Activated CD4-positive, alpha-beta memory T cell treated with anti-CD3 and anti-CD28 coated beads, Interleukin-2, amount 10 ng/mL, durations not matched to agents 7 days and 5 days (primary cell): ENCODE measurements at regions of chr14 and their contacts with region 1.

Region 1: GRCh38 chr14:49862089-49862673 is 9.6 kb upstream of the NEMF start:
- DNase-seq: peak; percentile 91
- H3K4me3 Mint-ChIP-seq: no peak overlapping the region
- H3K27ac Mint-ChIP-seq: no peak overlapping the region
- H3K4me1 Mint-ChIP-seq: peaks cover 29% of the 10 kb centered on the region
- H3K27me3 Mint-ChIP-seq: no peaks in the 10 kb centered on the region

Region 2: DNA sequence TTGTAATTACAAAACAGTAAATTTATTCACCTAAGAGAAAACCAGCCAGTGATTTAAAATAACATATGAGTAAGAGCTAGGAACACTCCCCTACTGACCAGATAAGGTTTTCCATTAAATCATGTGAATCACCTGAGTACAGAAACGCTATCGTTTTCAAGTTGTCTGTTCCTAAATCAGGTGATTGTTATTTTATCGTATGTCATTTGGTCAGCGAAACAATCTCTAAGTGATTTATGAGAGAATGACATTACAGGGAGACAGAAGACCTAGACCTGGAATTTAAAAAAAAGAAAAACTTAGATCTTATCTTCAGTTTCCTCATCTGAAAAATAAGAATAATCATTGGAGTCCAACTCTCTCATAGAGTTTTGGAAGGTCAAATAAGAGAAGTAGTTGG is 323.3 kb before region 1 on chr14:
- CTCF ChIA-PET with region 1: no interaction called
- POLR2A ChIA-PET with region 1: no interaction called
- DNase-seq: no peak
- H3K4me3 Mint-ChIP-seq: no peak overlapping the region
- H3K27ac Mint-ChIP-seq: no peak overlapping the region
- H3K4me1 Mint-ChIP-seq: no peaks in the 10 kb centered on the region
- H3K27me3 Mint-ChIP-seq: peaks cover 4% of the 10 kb centered on the region

Region 3: GRCh38 chr14:49585803-49586672 is 276.1 kb before region 1 on chr14 and contains the start of gene RPS29:
- CTCF ChIA-PET with region 1: interaction called, 15 read pairs
- POLR2A ChIA-PET with region 1: interaction called, 20 read pairs
- DNase-seq: peak; percentile 99
- H3K4me3 Mint-ChIP-seq: peak within 1 kb of the TSS; percentile 85
- H3K27ac Mint-ChIP-seq: peak within 1 kb of the TSS; percentile 99
- H3K4me1 Mint-ChIP-seq: peaks cover 50% of the 10 kb centered on the region
- H3K27me3 Mint-ChIP-seq: no peaks in the 10 kb centered on the region
- total RNA-seq, gene RPS29: 1,659 to 1,700 TPM

Region 4: DNA sequence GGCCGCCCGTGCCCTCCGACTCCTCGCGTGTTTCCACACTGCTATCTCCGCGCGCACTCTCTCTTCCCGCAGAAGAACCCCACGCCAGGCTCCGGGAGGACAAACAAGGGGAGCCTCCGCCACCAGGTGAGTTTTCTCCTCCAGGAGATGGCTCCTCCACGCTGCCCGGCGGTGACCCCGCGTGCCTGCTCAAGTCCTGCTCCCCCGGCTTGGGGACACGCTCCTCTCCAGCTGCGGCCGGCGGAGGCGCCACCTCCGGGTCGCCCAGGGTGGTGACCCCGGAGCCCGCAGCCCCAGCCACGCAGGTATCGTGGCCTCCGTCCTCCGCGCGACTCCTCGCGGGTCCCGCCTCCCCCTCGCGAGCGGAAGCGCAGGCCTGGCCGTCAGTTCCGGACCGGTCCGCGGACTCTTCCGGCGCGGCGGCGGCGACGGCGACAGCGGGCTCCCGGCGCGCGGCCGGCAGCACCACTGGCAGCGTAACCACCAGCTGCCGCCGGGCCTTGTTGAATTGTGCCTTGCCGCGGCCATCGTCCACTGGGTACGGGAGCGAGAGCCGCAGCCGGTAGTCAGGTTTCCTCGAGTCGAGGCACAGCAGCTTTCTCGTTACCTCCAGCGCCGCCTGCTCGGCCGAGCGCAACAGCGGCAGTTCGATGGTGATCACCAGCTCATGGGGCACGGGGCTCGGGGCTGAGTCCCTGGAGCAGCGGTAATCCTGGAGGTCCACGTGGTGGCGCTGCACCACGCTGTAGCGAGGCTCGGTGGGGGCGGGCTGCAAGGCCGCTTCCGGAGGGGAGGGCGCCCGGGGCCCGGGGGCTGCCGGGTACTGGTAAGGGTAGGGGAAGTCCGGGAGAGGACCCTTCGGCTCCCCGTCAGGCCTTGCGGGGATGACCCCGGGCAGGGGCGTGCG is 228.3 kb before region 1 on chr14:
- CTCF ChIA-PET with region 1: interaction called, 49 read pairs
- POLR2A ChIA-PET with region 1: interaction called, 27 read pairs
- DNase-seq: peak; percentile 95
- H3K4me3 Mint-ChIP-seq: peak overlapping the region; percentile 88
- H3K27ac Mint-ChIP-seq: peak overlapping the region; percentile 81
- H3K4me1 Mint-ChIP-seq: peaks cover 45% of the 10 kb centered on the region
- H3K27me3 Mint-ChIP-seq: no peaks in the 10 kb centered on the region

Region 5: DNA sequence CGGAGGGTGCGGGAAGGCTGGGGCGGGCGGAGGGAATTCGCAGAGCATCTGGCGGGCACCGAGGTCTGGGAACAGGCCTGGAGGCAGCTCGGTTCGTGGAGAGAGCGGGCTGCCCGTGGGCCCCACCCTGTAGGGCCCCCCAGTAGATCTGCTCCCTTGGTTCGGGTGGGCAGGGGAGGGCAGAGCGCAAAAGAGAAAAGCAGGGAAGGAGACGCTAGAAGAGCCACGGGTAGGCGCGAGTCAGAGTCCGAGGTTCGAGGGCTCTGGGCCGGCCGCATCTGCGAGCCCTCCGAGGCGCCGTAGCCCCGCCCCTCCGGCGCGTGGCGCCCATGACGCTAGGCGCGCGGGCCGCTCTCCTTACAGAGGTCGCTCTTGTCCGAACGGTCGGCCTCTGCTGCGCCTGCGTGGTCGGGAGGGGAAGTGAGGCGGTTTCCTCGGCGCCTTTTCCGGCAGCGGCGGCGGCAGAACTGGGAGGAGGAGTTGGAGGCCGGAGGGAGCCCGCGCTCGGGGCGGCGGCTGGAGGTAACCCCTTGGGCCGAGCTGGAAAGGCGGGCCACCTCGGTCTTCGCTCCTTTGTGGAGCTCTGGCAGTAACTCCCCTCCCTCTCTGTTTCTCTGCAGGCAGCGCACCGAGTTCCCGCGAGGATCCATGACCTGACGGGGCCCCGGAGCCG is 30.6 kb after region 1 on chr14 and contains the start of gene ARF6:
- CTCF ChIA-PET with region 1: interaction called, 35 read pairs
- POLR2A ChIA-PET with region 1: interaction called, 162 read pairs
- DNase-seq: peak; percentile 98
- H3K4me3 Mint-ChIP-seq: peak within 1 kb of the TSS; percentile 96
- H3K27ac Mint-ChIP-seq: peak within 1 kb of the TSS; percentile 100
- H3K4me1 Mint-ChIP-seq: peaks cover 20% of the 10 kb centered on the region
- H3K27me3 Mint-ChIP-seq: no peaks in the 10 kb centered on the region
- total RNA-seq, gene ARF6: 198 to 199 TPM

Region 6: GRCh38 chr14:49933704-49934103 is 71.5 kb after region 1 on chr14:
- CTCF ChIA-PET with region 1: no interaction called
- POLR2A ChIA-PET with region 1: no interaction called
- DNase-seq: no peak
- H3K4me3 Mint-ChIP-seq: no peak overlapping the region
- H3K27ac Mint-ChIP-seq: no peak overlapping the region
- H3K4me1 Mint-ChIP-seq: peaks cover 21% of the 10 kb centered on the region
- H3K27me3 Mint-ChIP-seq: no peaks in the 10 kb centered on the region

Region 7: DNA sequence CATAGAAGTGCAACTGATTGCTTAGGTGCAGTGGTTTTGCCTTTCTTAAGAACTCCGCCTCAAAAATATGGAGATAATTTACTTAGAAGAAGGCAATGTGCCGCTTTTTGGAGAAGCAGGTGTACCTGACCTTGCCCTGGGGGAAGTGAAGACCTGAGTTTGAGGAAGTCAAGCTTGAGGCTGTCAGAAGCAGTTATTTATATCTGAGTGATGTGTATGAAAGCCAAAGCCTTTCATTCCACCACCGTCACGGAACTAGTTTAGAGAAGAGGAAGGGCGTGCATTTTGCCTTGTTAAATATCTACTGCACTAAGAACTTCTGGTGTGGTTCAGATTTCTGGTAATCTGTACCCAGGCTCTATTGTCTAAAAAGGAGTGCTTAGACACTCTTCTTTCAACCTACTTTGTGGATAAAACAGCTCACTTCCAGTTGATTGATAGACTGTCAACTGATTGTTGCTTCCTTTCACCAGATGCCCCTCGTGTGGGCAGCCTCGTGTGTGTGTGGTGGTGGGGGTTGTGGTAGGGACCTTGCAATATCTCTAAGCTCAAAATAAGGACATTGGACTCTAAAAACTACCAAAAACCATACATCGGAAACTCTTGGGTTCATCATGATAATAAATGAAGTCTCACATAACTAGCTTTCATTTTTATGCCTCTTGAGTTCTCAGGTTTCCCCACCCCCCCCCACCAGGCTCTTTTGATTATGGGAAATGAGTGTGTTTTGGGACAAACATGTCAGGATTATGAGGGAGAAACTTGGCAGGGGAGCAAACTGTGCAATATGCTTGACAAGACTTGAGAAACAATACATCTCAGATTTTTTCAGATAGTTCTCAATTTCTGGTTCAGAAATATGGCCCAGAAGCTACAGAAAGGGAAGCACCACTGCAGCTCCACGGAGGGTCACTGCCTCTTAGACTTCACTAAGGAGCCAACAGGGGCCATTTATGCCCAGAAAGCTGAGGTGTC is 109.3 kb after region 1 on chr14:
- CTCF ChIA-PET with region 1: interaction called, 42 read pairs
- POLR2A ChIA-PET with region 1: interaction called, 70 read pairs
- DNase-seq: peak; percentile 63
- H3K4me3 Mint-ChIP-seq: peak overlapping the region; percentile 72
- H3K27ac Mint-ChIP-seq: peak overlapping the region; percentile 98
- H3K4me1 Mint-ChIP-seq: peaks cover 57% of the 10 kb centered on the region
- H3K27me3 Mint-ChIP-seq: no peaks in the 10 kb centered on the region

Region 8: DNA sequence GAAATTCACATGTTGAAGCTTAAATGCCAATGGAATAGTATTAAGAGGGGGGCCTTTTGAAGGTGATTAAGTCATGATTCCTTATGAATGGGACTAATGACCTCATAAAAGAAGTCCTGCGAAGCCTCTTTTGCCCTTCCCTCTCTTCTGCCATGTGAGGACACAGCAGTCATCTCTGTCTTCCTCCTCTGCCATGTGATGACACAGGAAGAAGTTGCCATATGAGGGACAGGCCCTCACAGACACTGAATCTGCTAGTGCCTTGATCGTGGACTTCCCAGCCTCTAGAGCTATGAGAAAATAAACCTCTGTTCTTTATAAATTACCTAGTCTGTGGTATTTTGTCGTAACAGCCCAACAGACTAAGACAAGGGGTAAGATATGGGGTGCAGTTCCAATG is 153.5 kb after region 1 on chr14:
- CTCF ChIA-PET with region 1: no interaction called
- POLR2A ChIA-PET with region 1: no interaction called
- DNase-seq: no peak
- H3K4me3 Mint-ChIP-seq: no peak overlapping the region
- H3K27ac Mint-ChIP-seq: no peak overlapping the region
- H3K4me1 Mint-ChIP-seq: peaks cover 33% of the 10 kb centered on the region
- H3K27me3 Mint-ChIP-seq: no peaks in the 10 kb centered on the region

Region 9: GRCh38 chr14:50060871-50061663 is 198.9 kb after region 1 on chr14:
- CTCF ChIA-PET with region 1: interaction called, 130 read pairs
- POLR2A ChIA-PET with region 1: interaction called, 189 read pairs
- DNase-seq: peak; percentile 59
- H3K4me3 Mint-ChIP-seq: peak overlapping the region; percentile 93
- H3K27ac Mint-ChIP-seq: peak overlapping the region; percentile 100
- H3K4me1 Mint-ChIP-seq: peaks cover 85% of the 10 kb centered on the region
- H3K27me3 Mint-ChIP-seq: no peaks in the 10 kb centered on the region

Region 10: DNA sequence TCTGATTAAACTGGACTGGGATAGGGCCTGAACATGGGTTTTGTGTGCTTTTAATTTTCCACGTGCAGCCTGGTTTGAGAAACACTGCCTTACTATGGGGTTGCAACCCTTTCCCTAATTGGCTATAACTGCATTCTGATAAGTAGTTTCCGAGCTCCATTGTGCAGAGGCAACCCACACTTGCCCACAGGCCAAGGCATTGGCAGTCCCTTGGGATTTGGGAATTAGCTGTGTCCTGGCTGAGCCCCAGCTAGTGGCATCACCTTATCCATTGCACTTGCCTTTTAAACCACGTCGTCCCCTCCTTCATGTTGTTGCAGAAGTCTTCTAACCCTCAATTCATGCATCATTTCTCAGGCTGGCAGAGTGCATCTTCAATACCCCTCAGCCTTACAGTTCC is 244.0 kb after region 1 on chr14:
- CTCF ChIA-PET with region 1: interaction called, 31 read pairs
- POLR2A ChIA-PET with region 1: interaction called, 30 read pairs
- DNase-seq: no peak
- H3K4me3 Mint-ChIP-seq: no peak overlapping the region
- H3K27ac Mint-ChIP-seq: no peak overlapping the region
- H3K4me1 Mint-ChIP-seq: peaks cover 31% of the 10 kb centered on the region
- H3K27me3 Mint-ChIP-seq: no peaks in the 10 kb centered on the region